ENCODE measurements at regions of chr7 and their contacts with region 1.

Region 1: DNA sequence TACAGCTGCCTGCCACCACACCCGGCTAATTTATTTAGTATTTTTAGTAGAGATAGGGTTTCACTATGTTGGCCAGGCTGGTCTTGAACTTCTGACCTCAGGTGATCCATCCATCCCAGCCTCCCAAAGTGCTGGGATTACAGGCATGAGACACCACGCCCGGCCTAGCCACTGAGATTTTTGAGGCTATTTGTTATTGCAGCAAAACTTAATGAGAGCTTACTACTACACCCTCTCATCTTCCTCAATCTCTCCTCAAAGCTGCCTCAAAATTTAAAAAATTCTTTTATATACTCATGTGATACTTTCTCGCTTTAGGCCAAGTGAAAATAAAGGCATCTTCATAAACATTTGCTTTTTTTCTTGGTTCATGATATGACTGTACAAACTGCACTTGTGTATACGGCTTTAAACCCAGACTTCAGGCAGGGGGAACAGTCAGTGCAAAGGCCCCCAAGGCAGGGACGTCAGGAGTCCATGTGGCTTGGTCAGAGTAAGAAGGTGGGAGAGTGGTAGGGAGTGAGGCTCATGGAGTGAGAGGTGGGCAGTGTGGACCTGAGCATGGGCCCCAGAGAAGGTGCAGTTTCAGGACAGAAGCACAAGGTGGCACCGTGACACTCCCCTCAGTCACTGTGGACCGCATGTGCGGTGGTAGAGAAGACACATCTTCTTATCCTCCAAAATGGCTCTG is 55.5 kb downstream of the SYPL1 start:
- DNase-seq: peak; percentile 80
- H3K4me3 Mint-ChIP-seq: no peak overlapping the region
- H3K27ac Mint-ChIP-seq: no peak overlapping the region
- H3K4me1 Mint-ChIP-seq: peaks cover 13% of the 10 kb centered on the region
- H3K27me3 Mint-ChIP-seq: no peaks in the 10 kb centered on the region

Region 2: GRCh38 chr7:106071356-106071998 is 14.8 kb after region 1 on chr7:
- CTCF ChIA-PET with region 1: interaction called, 20 read pairs
- POLR2A ChIA-PET with region 1: no interaction called
- intact Hi-C with region 1: loop called (anchors 1 kb)
- DNase-seq: peak; percentile 67
- H3K4me3 Mint-ChIP-seq: peak overlapping the region; percentile 62
- H3K27ac Mint-ChIP-seq: peak overlapping the region; percentile 92
- H3K4me1 Mint-ChIP-seq: peaks cover 26% of the 10 kb centered on the region
- H3K27me3 Mint-ChIP-seq: no peaks in the 10 kb centered on the region

Region 3: GRCh38 chr7:106094800-106095199 is 38.1 kb after region 1 on chr7:
- CTCF ChIA-PET with region 1: no interaction called
- POLR2A ChIA-PET with region 1: no interaction called
- intact Hi-C with region 1: loop called (anchors 5 kb)
- DNase-seq: no peak
- H3K4me3 Mint-ChIP-seq: no peak overlapping the region
- H3K27ac Mint-ChIP-seq: no peak overlapping the region
- H3K4me1 Mint-ChIP-seq: peaks cover 11% of the 10 kb centered on the region
- H3K27me3 Mint-ChIP-seq: no peaks in the 10 kb centered on the region

Region 4: DNA sequence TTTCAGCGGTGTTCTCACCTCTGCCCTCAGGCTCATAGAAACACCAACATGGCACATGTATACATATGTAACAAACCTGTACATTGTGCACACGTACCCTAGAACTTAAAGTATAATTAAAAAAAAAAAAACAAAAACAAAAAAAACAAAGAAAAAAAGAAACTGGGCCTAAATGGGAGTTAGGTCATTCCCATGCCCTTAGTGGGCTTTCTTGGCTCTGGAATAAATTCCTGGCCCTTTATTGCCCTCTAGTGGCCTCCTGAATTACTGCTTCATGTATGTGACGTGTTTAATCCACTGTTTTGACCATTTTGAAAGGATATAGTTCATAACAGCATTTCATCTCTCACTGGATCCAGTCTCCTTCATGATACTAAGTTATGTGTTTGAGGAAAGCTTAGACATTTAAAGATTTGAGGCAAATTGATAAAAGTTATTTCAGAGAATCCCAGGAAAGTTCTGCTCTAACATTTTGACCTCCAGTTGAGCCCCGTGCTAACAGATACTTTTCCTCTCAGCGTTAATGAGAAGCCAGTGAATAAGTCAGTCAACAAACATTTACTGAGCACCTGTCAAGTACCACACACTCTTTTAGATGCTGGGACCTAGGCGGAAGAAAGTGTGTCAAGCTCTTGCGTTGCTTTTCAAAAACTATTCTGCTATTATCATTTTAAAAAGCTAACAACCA is 110.1 kb after region 1 on chr7:
- CTCF ChIA-PET with region 1: interaction called, 53 read pairs
- POLR2A ChIA-PET with region 1: no interaction called
- intact Hi-C with region 1: loop called (anchors 1 kb)
- DNase-seq: peak; percentile 21
- H3K4me3 Mint-ChIP-seq: no peak overlapping the region
- H3K27ac Mint-ChIP-seq: peak overlapping the region; percentile 24
- H3K4me1 Mint-ChIP-seq: peaks cover 3% of the 10 kb centered on the region
- H3K27me3 Mint-ChIP-seq: peaks cover 10% of the 10 kb centered on the region

Region 5: GRCh38 chr7:106767498-106768323 is 711.1 kb after region 1 on chr7:
- CTCF ChIA-PET with region 1: no interaction called
- POLR2A ChIA-PET with region 1: no interaction called
- intact Hi-C with region 1: no loop called
- DNase-seq: peak; percentile 18
- H3K4me3 Mint-ChIP-seq: peak overlapping the region; percentile 42
- H3K27ac Mint-ChIP-seq: peak overlapping the region; percentile 65
- H3K4me1 Mint-ChIP-seq: peaks cover 49% of the 10 kb centered on the region
- H3K27me3 Mint-ChIP-seq: no peaks in the 10 kb centered on the region

Measured in activated CD4-positive, alpha-beta memory T cell treated with anti-CD3 and anti-CD28 coated beads for 36 hours (primary cell).